ENCODE measurements at regions of chr2 and their contacts with region 1.

Region 1: DNA sequence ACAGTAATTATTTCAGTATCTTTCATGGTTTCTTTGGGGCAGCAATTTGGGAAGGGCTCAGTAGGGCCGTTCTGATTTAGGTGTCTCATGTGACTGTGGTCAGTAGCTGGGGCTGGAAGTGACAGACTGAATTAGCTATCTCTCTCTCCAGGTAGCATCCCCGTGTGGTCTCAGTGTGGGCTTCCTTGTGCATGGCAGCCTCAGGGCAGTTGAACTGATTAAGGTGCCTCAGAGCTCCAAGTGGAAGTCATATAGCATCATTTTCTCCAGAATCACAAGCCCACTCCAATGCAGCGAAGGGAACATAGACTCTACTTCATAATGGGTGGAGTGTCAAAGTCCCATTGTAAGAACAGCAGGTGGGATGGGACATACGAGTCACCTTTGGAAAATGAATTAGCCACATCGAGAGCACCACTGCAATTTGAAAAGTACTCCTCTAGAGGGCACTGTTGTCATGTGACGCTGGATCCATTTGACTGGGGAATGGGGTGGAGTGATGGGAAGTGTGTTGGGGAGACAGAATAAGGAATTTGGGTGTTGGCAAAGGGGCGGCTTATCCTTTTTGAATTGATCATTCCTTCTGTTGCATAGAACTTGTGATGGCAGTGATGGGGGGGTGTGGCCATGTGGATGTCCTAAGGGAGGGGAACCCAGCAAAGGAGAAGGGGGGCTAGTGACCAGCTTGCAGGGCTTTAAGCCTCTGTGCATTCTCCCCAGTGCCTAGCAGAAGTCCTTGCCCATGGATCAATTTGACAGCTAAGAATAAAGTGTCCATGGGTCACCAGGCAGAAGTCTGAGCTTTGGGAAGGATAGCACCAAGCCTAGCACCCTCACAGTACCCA is 39.3 kb upstream of the FAM136A start:
- DNase-seq: peak; percentile 24 to 71
- ATAC-seq: peak; percentile 64 to 76 (median 68)
- H3K4me3 ChIP-seq: no peak overlapping the region
- H3K4me3 Mint-ChIP-seq: no peak overlapping the region
- H3K27ac ChIP-seq: no peak overlapping the region
- H3K27ac Mint-ChIP-seq: no peak overlapping the region
- H3K4me1 ChIP-seq: no peaks in the 10 kb centered on the region
- H3K4me1 Mint-ChIP-seq: peaks cover 0 to 6% of the 10 kb centered on the region in 2 donors
- H3K27me3 ChIP-seq: no peaks in the 10 kb centered on the region
- H3K27me3 Mint-ChIP-seq: peaks cover 0 to 17% of the 10 kb centered on the region in 2 donors
- CTCF ChIP-seq: peak; percentile 77

Region 2: GRCh38 chr2:70301344-70302194 is 39.6 kb before region 1 on chr2 and contains the start of gene FAM136A:
- intact Hi-C with region 1: no loop called
- DNase-seq: peak; percentile 88 to 92
- ATAC-seq: peak; percentile 94 to 98 (median 94)
- H3K4me3 ChIP-seq: peak within 1 kb of the TSS; percentile 85
- H3K4me3 Mint-ChIP-seq: peak within 1 kb of the TSS; percentile 95
- H3K27ac ChIP-seq: peak within 1 kb of the TSS; percentile 69
- H3K27ac Mint-ChIP-seq: peak within 1 kb of the TSS; percentile 79 to 83
- H3K4me1 ChIP-seq: peaks cover 18% of the 10 kb centered on the region
- H3K4me1 Mint-ChIP-seq: peaks cover 19 to 23% of the 10 kb centered on the region in 2 donors
- H3K27me3 ChIP-seq: no peaks in the 10 kb centered on the region
- H3K27me3 Mint-ChIP-seq: no peaks in the 10 kb centered on the region
- CTCF ChIP-seq: peak; percentile 76
- total RNA-seq, gene FAM136A: 32.5 to 38.3 (median 36.6) TPM

Region 3: GRCh38 chr2:70616168-70616694 is 275.1 kb after region 1 on chr2:
- intact Hi-C with region 1: loop called (anchors 1 kb)
- DNase-seq: no peak
- ATAC-seq: no peak
- H3K4me3 ChIP-seq: no peak overlapping the region
- H3K4me3 Mint-ChIP-seq: no peak overlapping the region
- H3K27ac ChIP-seq: no peak overlapping the region
- H3K27ac Mint-ChIP-seq: no peak overlapping the region
- H3K4me1 ChIP-seq: no peaks in the 10 kb centered on the region
- H3K4me1 Mint-ChIP-seq: no peaks in the 10 kb centered on the region
- H3K27me3 ChIP-seq: no peaks in the 10 kb centered on the region
- H3K27me3 Mint-ChIP-seq: peaks cover 13 to 28% of the 10 kb centered on the region in 2 donors
- CTCF ChIP-seq: no peak

Region 4: DNA sequence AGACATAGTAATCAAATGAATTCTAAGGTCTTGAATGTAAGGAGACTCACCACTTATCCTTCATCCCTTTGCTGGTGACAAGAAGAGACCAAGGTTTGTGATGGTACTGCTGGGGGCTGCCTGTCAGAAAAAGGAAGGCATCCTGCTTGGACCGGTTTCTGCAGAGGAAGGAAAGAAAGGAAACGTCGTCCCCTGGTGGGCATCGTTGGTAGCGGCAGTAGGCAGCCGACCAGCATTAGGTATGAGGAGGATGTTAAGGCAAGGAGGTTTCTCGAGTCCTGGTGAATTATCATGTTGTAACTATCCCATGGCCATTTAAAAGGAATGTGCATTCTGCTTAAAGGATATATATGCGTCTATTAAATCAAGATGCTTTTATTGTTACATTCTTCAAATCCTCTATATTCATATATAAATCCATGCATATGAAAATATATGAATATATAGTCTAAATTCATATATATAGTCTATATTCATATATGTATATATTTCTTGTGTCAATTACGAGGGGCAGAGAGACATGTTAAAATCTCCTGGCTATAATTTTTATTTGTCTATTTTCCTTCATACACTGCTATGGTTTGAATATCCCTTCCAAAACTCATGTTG is 306.8 kb after region 1 on chr2:
- intact Hi-C with region 1: loop called (anchors 1 kb)
- DNase-seq: peak; percentile 60 to 86
- ATAC-seq: peak; percentile 69 to 95 (median 90)
- H3K4me3 ChIP-seq: no peak overlapping the region
- H3K4me3 Mint-ChIP-seq: no peak overlapping the region
- H3K27ac ChIP-seq: no peak overlapping the region
- H3K27ac Mint-ChIP-seq: no peak overlapping the region
- H3K4me1 ChIP-seq: no peaks in the 10 kb centered on the region
- H3K4me1 Mint-ChIP-seq: no peaks in the 10 kb centered on the region
- H3K27me3 ChIP-seq: no peaks in the 10 kb centered on the region
- H3K27me3 Mint-ChIP-seq: peaks cover 18 to 21% of the 10 kb centered on the region in 2 donors
- CTCF ChIP-seq: peak; percentile 96